Posterior cingulate gyrus (tissue), 11 donors: ENCODE measurements at regions of chr9 and their contacts with region 1.

Region 1: GRCh38 chr9:113275157-113276131 is at the starts of genes CDC26 and PRPF4:
- DNase-seq: peak; percentile 95 to 99 (median 98)

Region 2: GRCh38 chr9:112618385-112619009 is 656.9 kb before region 1 on chr9:
- intact Hi-C with region 1: no loop called
- DNase-seq: peak in 2 of 10 donors; percentile 59 to 74

Region 3: DNA sequence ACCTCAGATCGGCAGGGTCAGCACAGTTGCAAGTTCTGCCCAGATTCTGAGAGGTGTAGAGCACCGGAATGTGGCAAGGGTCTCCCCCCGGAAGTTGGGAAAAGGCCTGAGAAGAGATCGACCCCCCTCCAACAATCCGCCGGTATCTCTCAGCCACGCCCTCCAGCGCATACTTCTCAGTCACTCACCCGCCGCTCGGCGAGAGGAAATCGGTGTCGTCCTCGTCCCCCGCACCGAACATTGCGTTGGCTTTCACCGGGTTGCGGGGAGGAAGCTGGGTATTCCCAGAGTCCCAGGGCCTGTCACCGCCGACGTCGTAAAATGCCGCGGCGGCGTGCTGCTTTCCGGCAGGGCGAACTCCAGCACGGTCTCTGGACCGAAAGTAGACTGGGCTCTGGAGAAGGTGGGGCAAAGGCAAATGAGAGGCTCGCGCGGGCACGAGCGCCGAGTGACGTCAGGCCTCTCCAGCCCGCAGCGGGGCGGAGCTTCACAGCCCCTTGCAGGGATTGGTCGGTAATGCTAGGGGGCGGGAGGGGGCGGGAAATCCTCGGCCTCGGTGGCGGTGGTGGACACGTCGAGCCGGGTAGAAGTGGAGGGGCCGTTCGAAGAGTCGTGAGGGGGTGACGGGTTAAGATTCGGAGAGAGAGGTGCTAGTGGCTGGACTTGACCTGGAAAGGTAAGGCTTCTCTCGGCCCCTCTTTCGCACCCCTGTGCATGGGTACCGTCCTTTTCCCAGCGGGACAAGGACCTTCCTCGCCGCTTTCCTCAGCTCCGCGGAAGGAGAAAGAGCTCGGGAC is 54.2 kb before region 1 on chr9 and contains the starts of genes FKBP15 and SLC31A1:
- intact Hi-C with region 1: loop called (anchors 1 kb)
- DNase-seq: peak; percentile 98 to 100 (median 99)

Region 4: GRCh38 chr9:113401027-113401792 is 125.8 kb after region 1 on chr9 and contains the start of gene ALAD:
- intact Hi-C with region 1: loop called (anchors 2 kb)
- DNase-seq: peak; percentile 98 to 100 (median 100)

Region 5: DNA sequence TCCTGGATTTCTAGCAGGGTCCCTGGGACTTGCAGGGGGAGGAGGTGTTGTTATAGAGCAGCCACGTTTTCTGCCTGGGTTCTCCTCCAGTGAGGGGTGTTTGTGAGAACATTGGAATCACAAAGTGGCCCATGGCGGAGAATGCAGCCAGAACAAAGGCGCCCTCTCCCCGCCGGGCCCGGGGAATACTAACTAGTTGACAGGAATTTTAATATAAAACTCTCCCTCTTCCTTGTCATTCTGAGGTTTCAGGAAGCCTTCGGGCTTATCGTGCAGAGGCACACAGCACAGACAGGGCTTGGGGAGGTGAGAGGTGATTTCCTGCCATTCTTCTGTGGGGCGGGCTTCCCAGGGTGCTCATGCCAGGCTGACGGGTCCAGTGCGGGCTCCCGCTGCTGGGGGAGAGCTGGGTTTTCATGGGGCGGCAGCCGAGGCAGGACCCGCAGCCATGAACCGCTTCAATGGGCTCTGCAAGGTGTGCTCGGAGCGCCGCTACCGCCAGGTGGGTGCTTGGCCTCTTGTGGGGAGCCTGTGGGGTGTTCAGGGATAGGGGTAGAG is 225.8 kb after region 1 on chr9:
- intact Hi-C with region 1: no loop called
- DNase-seq: peak in 2 of 10 donors; percentile 63 to 67

Region 6: GRCh38 chr9:113657703-113658544 is 382.5 kb after region 1 on chr9:
- intact Hi-C with region 1: loop called (anchors 10 kb)
- DNase-seq: peak; percentile 74 to 97 (median 90)